ENCODE measurements at regions of chr11 and their contacts with region 1.

Region 1: DNA sequence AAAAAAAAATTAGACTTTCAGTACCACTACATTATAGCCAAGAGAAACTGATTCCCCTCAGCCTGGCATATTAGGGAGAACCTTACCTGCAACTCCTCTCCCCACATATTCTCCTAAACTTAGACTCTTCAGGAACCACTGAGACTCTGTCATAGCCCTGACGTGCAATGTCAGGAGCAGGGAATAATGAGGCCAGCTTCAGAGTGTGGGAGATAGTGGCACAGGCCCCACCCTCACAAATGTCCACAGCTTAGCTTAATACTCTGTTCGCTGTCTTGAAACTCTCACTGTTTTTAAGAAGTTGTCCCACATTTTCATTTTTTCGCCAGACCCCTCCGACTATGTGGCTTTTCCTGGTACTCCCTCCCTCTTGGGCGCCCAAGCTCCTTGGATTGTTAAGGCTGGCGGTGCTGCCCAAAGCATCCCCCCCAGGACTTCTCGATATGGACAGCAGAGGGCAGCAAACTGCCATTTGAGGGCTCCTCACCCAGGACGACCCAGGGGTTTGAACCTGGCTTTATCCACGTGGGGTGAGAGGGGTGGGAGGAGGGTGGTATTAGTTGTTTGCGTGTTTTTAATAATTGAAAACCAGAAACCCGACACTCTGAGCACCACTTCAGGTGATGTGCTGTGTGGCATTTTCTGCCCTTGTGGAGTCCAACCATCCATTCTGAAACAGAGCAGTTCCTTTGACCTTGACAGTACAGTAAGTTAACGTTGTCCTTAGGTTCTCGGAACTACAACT is 45.2 kb upstream of the RASSF10 start:
- DNase-seq: peak; percentile 48 to 70
- ATAC-seq: peak; percentile 81 to 91 (median 88)
- H3K4me3 ChIP-seq: no peak overlapping the region
- H3K27ac ChIP-seq: no peak overlapping the region
- H3K4me1 ChIP-seq: peaks cover 0 to 7% (median 0%) of the 10 kb centered on the region in 9 donors
- H3K27me3 ChIP-seq: peaks cover 0 to 6% (median 0%) of the 10 kb centered on the region in 7 donors
- CTCF ChIP-seq: peak; percentile 77 to 94 (median 89)

Region 2: DNA sequence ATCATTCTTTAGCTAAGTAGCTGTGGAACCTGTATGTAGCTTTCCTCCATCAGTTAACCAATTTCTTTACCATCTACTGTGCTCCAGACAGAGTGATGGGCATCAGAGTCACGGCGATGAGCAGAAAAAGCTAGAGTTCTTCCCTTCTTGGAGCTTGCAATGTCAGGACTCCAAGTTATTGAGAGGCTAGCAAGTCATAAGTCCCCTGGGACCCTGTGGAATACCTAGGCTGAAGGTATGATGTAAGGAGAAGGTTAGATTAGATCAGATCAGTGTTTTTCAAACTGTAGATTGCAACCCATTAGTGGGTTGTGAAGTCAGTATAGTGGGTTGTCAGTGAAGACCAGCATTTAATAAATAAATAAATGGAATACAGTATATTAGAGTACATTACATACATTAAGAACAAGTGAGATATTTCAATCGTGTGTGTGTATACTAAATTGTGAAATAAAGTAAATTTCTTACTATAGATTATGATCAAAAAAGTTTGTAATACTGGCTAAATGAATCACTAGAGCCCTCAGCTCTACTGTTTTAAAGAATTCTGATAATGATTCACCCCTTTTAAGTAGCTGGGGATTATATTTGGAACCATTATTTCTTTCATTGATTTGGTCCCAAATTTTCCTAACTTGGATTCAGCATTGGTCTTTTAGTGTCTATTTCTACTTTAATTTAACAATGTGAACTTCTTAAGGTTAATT is 97.5 kb after region 1 on chr11:
- intact Hi-C with region 1: no loop called
- DNase-seq: no peak
- ATAC-seq: no peak
- H3K4me3 ChIP-seq: no peak overlapping the region
- H3K27ac ChIP-seq: no peak overlapping the region
- H3K4me1 ChIP-seq: no peaks in the 10 kb centered on the region
- H3K27me3 ChIP-seq: peaks cover 0 to 15% (median 6%) of the 10 kb centered on the region in 7 donors
- CTCF ChIP-seq: no peak

Region 3: GRCh38 chr11:13152736-13153533 is 189.0 kb after region 1 on chr11:
- intact Hi-C with region 1: loop called (anchors 1 to 10 kb)
- DNase-seq: no peak
- ATAC-seq: no peak
- H3K4me3 ChIP-seq: no peak overlapping the region
- H3K27ac ChIP-seq: no peak overlapping the region
- H3K4me1 ChIP-seq: no peaks in the 10 kb centered on the region
- H3K27me3 ChIP-seq: peaks cover 0 to 5% (median 0%) of the 10 kb centered on the region in 7 donors
- CTCF ChIP-seq: peak; percentile 10 to 66 (median 50)

Region 4: GRCh38 chr11:13183094-13183825 is 219.3 kb after region 1 on chr11:
- intact Hi-C with region 1: loop called in 7 of 10 experiments (anchors 1 to 10 kb)
- DNase-seq: no peak
- ATAC-seq: peak in 7 of 8 donors; percentile 45 to 69 (median 63)
- H3K4me3 ChIP-seq: peak overlapping the region in 6 of 10 donors; percentile 8 to 29 (median 18)
- H3K27ac ChIP-seq: no peak overlapping the region
- H3K4me1 ChIP-seq: peaks cover 0 to 8% (median 5%) of the 10 kb centered on the region in 9 donors
- H3K27me3 ChIP-seq: no peaks in the 10 kb centered on the region
- CTCF ChIP-seq: peak; percentile 21 to 65 (median 47)

Region 5: DNA sequence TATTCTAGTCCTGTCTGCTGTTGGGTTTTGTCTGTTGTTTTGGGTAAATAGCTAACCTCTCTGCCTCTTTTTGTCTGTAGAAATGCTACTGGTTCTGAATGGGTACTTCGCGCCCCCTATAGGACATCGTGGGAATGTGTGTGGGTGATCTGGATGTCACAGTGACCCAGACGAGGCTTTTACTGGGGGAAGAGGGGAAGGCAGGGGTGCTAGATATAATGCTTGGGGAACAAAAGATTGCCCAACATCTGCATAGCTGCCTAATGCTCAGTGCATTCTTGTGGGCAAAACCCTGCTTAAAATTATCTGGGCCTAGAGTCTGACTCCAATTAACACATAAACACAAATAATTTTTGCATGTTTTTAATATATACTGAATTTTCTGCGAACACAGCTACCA is 371.4 kb after region 1 on chr11:
- intact Hi-C with region 1: loop called in 8 of 10 experiments (anchors 5 to 10 kb)
- DNase-seq: peak; percentile 43 to 54
- ATAC-seq: peak in 3 of 8 donors; percentile 32 to 56 (median 43)
- H3K4me3 ChIP-seq: no peak overlapping the region
- H3K27ac ChIP-seq: no peak overlapping the region
- H3K4me1 ChIP-seq: peaks cover 1 to 89% (median 76%) of the 10 kb centered on the region in 9 donors
- H3K27me3 ChIP-seq: no peaks in the 10 kb centered on the region
- CTCF ChIP-seq: peak; percentile 51 to 84 (median 78)

Region 6: GRCh38 chr11:13343931-13344717 is 380.2 kb after region 1 on chr11:
- intact Hi-C with region 1: loop called in 9 of 10 experiments (anchors 5 to 10 kb)
- DNase-seq: peak; percentile 20 to 81
- ATAC-seq: peak in 7 of 8 donors; percentile 25 to 57 (median 29)
- H3K4me3 ChIP-seq: no peak overlapping the region
- H3K27ac ChIP-seq: no peak overlapping the region
- H3K4me1 ChIP-seq: peaks cover 0 to 34% (median 22%) of the 10 kb centered on the region in 9 donors
- H3K27me3 ChIP-seq: no peaks in the 10 kb centered on the region
- CTCF ChIP-seq: peak; percentile 79 to 90 (median 86)

Measured in heart right ventricle (tissue), 16 donors.